ENCODE measurements at regions of chr16 and their contacts with region 1.

Region 1: DNA sequence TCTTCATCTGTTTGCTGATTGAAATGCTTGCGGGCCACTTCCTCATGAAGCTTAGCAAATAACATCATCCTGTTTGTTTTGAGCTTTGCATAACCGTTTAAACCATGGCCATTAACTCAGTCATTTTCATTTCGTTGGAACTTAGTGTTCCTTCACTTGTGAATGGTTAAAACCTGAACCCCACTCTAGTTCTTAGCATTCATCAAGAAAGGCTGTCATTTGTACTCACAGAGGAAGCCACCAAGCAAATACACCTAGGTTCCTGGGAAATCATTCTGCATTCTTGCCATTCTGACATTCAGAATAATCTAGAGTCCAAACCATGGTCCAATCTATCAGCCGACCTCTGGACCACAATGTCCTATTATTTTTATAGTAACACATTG is 8.4 kb upstream of the TAT start:
- DNase-seq: peak; percentile 83
- ATAC-seq: peak; percentile 58
- H3K4me3 ChIP-seq: peak overlapping the region in 2 of 3 experiments; percentile 25 to 35; a peak in 2 of 6 replicates
- H3K27ac ChIP-seq: peak overlapping the region; percentile 90
- H3K4me1 ChIP-seq: peaks cover 77% of the 10 kb centered on the region
- H3K27me3 ChIP-seq: no peaks in the 10 kb centered on the region
- CTCF ChIP-seq: no peak
- EP300 ChIP-seq: peak in 1 of 2 experiments; percentile 88; a peak in 2 of 4 replicates
- POLR2A ChIP-seq: 0 out of 4 replicates have a peak, but pooled peaks of 1 of the 2 experiments have one; percentile 18
- RAD21 ChIP-seq: no peak

Region 2: DNA sequence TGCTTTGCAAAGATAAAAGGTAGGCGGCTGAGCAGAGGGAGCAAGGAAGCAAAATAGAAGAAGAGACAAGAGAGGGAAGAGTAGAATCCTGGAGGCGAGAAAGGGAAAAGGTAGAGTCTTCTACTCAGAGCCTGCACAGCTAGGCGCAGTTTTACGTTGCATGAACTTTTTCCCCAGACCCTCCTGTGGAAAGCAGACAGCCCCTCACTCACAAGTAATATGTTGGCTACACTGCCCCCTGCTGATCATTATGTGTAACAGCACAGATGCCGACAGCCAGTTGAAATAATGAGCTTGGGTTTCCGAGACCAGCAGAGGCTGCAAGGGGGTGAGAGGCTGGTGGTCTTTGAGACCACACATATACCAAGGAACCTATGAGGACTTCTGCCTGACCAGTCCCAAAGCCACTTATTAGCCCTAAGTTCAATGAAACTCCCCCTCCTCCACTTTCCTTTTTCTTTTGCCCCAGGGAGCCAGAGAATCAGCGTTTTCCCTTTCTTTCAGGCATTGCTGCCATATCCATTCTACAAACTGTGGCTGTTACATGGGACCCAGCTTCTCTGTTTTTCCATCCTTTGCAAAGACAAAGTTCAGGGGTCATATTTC is 273.7 kb before region 1 on chr16:
- CTCF ChIA-PET with region 1: no interaction called
- POLR2A ChIA-PET with region 1: no interaction called
- in situ Hi-C with region 1: no loop called
- intact Hi-C with region 1: no loop called
- DNase-seq: peak; percentile 54
- ATAC-seq: peak; percentile 61; the same call in 2 of the 3 replicates
- H3K4me3 ChIP-seq: no peak overlapping the region
- H3K27ac ChIP-seq: no peak overlapping the region
- H3K4me1 ChIP-seq: no peaks in the 10 kb centered on the region
- H3K27me3 ChIP-seq: peaks cover 0 to 2% of the 10 kb centered on the region in 2 experiments; a peak in 1 of 5 replicates
- CTCF ChIP-seq: peak; percentile 91
- EP300 ChIP-seq: no peak
- POLR2A ChIP-seq: no peak
- RAD21 ChIP-seq: peak; percentile 89

Region 3: DNA sequence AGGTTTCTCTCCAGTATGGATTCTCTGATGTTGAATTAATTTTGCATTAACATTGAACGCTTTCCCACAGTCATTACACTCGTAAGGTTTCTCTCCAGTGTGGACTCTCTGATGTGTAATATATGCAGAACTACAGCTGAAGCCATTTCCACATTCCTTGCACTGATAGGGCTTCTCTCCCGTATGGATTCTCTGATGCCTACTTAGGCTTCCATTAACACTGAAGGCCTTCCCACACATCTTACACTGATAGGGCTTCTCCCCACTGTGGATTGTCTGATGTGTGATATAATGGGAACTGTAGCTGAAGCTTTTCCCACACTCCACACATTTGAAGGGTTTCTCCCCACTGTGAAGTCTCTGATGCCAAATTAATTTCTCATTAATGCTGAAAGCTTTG is 136.3 kb before region 1 on chr16:
- CTCF ChIA-PET with region 1: no interaction called
- POLR2A ChIA-PET with region 1: no interaction called
- in situ Hi-C with region 1: no loop called
- intact Hi-C with region 1: no loop called
- DNase-seq: no peak
- ATAC-seq: no peak
- H3K4me3 ChIP-seq: no peak overlapping the region
- H3K27ac ChIP-seq: no peak overlapping the region
- H3K4me1 ChIP-seq: peaks cover 6% of the 10 kb centered on the region; the same call in 1 of the 2 replicates
- H3K27me3 ChIP-seq: no peaks in the 10 kb centered on the region
- CTCF ChIP-seq: no peak
- EP300 ChIP-seq: no peak
- POLR2A ChIP-seq: no peak
- RAD21 ChIP-seq: no peak

Region 4: GRCh38 chr16:71552698-71553451 is 32.4 kb before region 1 on chr16:
- CTCF ChIA-PET with region 1: no interaction called
- POLR2A ChIA-PET with region 1: no interaction called
- in situ Hi-C with region 1: no loop called
- intact Hi-C with region 1: no loop called
- DNase-seq: peak; percentile 64
- ATAC-seq: peak; percentile 93
- H3K4me3 ChIP-seq: peak overlapping the region in 1 of 3 experiments; percentile 13; a peak in 1 of 6 replicates
- H3K27ac ChIP-seq: no peak overlapping the region
- H3K4me1 ChIP-seq: peaks cover 29% of the 10 kb centered on the region
- H3K27me3 ChIP-seq: no peaks in the 10 kb centered on the region
- CTCF ChIP-seq: peak; percentile 84
- EP300 ChIP-seq: no peak
- POLR2A ChIP-seq: no peak
- RAD21 ChIP-seq: peak; percentile 55; the same call in 1 of the 2 replicates

Region 5: DNA sequence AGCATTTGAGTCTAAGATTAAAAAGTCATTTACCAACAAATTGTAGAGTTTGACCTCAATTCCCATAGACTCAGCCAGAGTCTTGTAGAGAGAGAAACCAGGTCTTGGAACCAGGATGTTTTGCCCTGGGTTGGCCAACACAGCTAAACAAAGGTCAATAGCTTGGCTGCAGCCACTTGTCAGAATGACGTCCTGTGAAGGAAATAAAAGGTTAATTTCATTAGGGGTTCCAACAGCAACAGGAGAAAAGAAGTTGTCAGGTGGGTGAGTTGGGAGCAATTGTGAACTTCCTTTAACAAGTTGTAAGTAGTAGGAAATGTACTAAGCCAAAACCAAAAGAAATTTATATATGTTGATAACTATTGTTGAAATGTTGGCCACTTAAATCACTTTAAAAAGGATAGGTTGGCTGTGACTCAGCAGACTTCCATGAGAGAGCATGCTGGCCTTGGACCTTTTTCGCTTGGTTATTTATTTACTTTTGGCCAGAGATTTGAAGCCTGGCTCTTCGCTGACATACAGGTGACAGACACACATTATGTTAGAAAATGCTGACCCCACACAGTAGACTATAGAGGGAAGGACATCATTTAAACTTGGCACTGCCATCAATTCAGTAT is 12.7 kb before region 1 on chr16:
- CTCF ChIA-PET with region 1: no interaction called
- POLR2A ChIA-PET with region 1: interaction called, 93 read pairs
- in situ Hi-C with region 1: no loop called
- intact Hi-C with region 1: loop called (anchors 1 kb)
- DNase-seq: peak; percentile 97
- ATAC-seq: peak; percentile 99
- H3K4me3 ChIP-seq: peak overlapping the region in 2 of 3 experiments; percentile 19 to 20; a peak in 2 of 6 replicates
- H3K27ac ChIP-seq: peak overlapping the region; percentile 91
- H3K4me1 ChIP-seq: peaks cover 83% of the 10 kb centered on the region
- H3K27me3 ChIP-seq: no peaks in the 10 kb centered on the region
- CTCF ChIP-seq: no peak
- EP300 ChIP-seq: peak; percentile 15 to 82; a peak in 3 of 4 replicates
- POLR2A ChIP-seq: peak; percentile 44 to 51; a peak in 2 of 4 replicates
- RAD21 ChIP-seq: peak; percentile 13; the same call in 1 of the 2 replicates

Region 6: GRCh38 chr16:71600822-71601221 is 15.5 kb after region 1 on chr16:
- CTCF ChIA-PET with region 1: no interaction called
- POLR2A ChIA-PET with region 1: interaction called, 78 read pairs
- in situ Hi-C with region 1: no loop called
- intact Hi-C with region 1: no loop called
- DNase-seq: peak; percentile 50
- ATAC-seq: peak; percentile 99
- H3K4me3 ChIP-seq: peak overlapping the region in 1 of 3 experiments; percentile 54; a peak in 2 of 6 replicates
- H3K27ac ChIP-seq: peak overlapping the region; percentile 16
- H3K4me1 ChIP-seq: peaks cover 59% of the 10 kb centered on the region
- H3K27me3 ChIP-seq: no peaks in the 10 kb centered on the region
- CTCF ChIP-seq: peak; percentile 83
- EP300 ChIP-seq: no peak
- POLR2A ChIP-seq: no peak
- RAD21 ChIP-seq: peak; percentile 36; the same call in 1 of the 2 replicates

Region 7: GRCh38 chr16:71961066-71962039 is 376.0 kb after region 1 on chr16:
- CTCF ChIA-PET with region 1: no interaction called
- POLR2A ChIA-PET with region 1: no interaction called
- in situ Hi-C with region 1: no loop called
- intact Hi-C with region 1: no loop called
- DNase-seq: peak; percentile 91
- ATAC-seq: peak; percentile 96
- H3K4me3 ChIP-seq: no peak overlapping the region
- H3K27ac ChIP-seq: no peak overlapping the region
- H3K4me1 ChIP-seq: peaks cover 40% of the 10 kb centered on the region
- H3K27me3 ChIP-seq: no peaks in the 10 kb centered on the region
- CTCF ChIP-seq: peak; percentile 95
- EP300 ChIP-seq: no peak
- POLR2A ChIP-seq: no peak
- RAD21 ChIP-seq: peak; percentile 88

Measured in HepG2 (cell line).